ENCODE measurements at regions of chrX and their contacts with region 1.

Region 1: DNA sequence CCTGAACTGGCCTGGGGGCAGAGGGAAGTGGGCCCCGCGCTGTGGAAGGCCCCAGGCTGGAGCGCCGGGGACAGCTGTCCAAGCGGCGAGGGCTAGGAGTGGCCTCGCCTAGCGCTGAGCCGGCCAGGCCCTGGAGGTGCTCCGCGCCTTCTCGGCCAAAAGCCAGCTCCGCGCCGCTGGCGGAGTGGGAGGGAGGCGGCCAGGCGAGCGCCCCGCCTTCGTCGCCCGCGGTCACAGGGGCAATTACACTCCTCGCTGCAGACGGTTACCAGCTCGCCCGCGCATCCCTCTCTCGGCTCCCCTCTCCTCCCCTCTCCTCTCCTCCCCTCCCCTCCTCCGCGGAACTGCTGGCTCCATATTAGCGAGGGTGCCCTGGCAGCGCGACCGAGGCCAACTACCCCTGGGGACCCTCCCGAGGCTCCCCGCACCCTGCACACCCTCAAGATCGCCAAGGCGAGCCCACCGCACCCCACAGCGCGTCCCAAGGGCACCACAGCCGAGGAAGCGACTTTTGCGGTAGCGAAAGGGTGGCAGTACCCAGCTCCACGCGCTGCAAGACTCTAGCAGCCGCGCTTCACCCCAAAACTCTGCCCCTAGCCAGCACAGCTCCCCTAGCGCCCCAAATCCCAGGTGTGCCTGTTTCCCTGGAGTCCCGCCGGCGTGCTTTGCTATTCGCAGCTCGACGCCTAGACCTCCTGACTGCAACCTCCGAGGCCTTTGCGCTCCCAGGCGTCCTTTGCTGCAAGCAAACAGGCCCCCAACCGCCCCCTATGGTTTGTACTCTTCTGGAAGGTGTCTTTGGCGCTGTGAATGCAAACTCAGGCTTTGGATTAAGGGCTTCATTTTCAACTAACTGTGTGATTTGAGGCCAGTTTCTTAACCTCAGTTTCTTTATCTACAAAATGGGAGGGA is 91.4 kb downstream of the BCOR start:
- DNase-seq: peak; percentile 21
- H3K4me3 Mint-ChIP-seq: no peak overlapping the region
- H3K27ac Mint-ChIP-seq: no peak overlapping the region
- H3K4me1 Mint-ChIP-seq: peaks cover 24% of the 10 kb centered on the region
- H3K27me3 Mint-ChIP-seq: peaks cover 24% of the 10 kb centered on the region

Region 2: GRCh38 chrX:38811515-38812243 is 1194.7 kb before region 1 on chrX:
- intact Hi-C with region 1: loop called (anchors 5 kb)
- DNase-seq: no peak
- H3K4me3 Mint-ChIP-seq: peak overlapping the region; percentile 20
- H3K27ac Mint-ChIP-seq: peak overlapping the region; percentile 93
- H3K4me1 Mint-ChIP-seq: peaks cover 36% of the 10 kb centered on the region
- H3K27me3 Mint-ChIP-seq: no peaks in the 10 kb centered on the region

Region 3: GRCh38 chrX:40022421-40022820 is 16.1 kb after region 1 on chrX:
- intact Hi-C with region 1: no loop called
- DNase-seq: no peak
- H3K4me3 Mint-ChIP-seq: no peak overlapping the region
- H3K27ac Mint-ChIP-seq: no peak overlapping the region
- H3K4me1 Mint-ChIP-seq: peaks cover 22% of the 10 kb centered on the region
- H3K27me3 Mint-ChIP-seq: no peaks in the 10 kb centered on the region